ENCODE measurements at regions of chr1 and their contacts with region 1.

Region 1: DNA sequence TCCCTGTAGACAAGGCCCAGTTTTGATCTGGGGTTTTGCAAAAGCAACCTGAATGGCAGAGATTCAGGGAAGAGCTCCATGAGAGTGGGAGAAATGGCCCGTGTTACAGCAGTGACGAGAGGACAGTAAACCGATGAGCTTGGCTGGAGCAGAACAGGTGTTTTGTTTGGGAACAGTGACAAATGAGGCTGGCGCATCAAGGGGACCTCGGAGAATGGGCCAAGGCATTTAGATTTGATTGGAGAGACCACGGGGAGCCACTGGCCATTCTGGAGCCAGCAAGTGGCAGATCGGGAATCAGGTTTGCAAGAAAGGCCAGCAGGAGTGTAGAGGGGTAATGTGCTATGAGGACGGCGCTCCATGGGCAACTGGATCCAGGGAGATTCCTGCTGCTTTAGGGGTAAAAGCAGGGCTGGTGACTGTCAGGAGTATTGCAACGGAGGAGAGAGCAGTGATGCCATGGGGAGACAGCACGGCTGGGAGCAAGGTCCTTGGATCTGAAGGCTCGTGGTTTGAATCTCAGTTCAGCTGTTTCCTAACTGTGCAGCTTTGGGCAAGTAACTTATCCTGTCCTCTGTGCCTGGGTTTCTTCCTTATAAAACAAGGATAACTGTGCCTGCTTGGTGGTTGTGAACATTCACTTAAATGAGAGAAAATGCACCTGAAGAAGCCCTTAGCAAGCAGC is 9.9 kb upstream of the KLHDC7A start:
- DNase-seq: no peak
- H3K4me3 ChIP-seq: no peak overlapping the region
- H3K27ac ChIP-seq: no peak overlapping the region
- H3K4me1 ChIP-seq: peaks cover 0 to 1% (median 0%) of the 10 kb centered on the region in 4 experiments; a peak in 3 of 7 replicates
- H3K27me3 ChIP-seq: no peaks in the 10 kb centered on the region
- CTCF ChIP-seq: no peak
- EP300 ChIP-seq: no peak
- POLR2A ChIP-seq: no peak
- RAD21 ChIP-seq: no peak

Region 2: DNA sequence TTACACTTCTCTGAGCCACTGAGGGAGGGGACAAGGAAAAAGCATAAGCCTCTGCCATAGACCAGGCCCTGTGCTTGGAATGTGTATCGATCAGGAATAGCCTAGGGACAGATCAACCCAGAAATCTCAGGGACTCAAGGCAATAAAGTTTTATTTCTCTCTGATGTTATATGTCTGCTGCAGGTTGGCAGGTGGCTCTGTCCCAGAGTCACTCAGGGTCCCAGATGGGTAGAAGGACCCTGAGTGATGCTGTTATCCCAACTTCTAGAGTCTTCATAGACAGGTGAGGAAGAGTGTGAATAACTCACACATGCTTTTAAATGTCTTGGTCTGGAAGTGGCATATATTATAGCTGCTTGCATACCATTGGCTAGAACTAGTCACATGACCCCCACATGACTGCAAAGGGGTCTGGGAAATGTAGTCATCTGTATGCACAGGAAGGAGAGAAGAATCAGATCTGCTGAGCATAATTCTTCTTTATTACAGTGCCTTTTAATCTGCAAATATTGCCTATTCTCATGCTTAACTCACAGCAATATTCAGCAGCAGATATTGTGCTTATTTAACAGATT is 18.4 kb before region 1 on chr1:
- CTCF ChIA-PET with region 1: no interaction called
- POLR2A ChIA-PET with region 1: no interaction called
- DNase-seq: no peak
- H3K4me3 ChIP-seq: no peak overlapping the region
- H3K27ac ChIP-seq: no peak overlapping the region
- H3K4me1 ChIP-seq: peaks cover 2 to 10% (median 5%) of the 10 kb centered on the region in 4 experiments; a peak in 6 of 7 replicates
- H3K27me3 ChIP-seq: no peaks in the 10 kb centered on the region; a peak in 2 of 7 replicates
- CTCF ChIP-seq: no peak
- EP300 ChIP-seq: no peak
- POLR2A ChIP-seq: no peak
- RAD21 ChIP-seq: no peak

Region 3: GRCh38 chr1:18486195-18486594 is 15.4 kb after region 1 on chr1:
- CTCF ChIA-PET with region 1: interaction called, 26 read pairs
- POLR2A ChIA-PET with region 1: interaction called, 19 read pairs
- DNase-seq: peak; percentile 19 to 74
- H3K4me3 ChIP-seq: no peak overlapping the region
- H3K27ac ChIP-seq: no peak overlapping the region
- H3K4me1 ChIP-seq: peaks cover 0 to 18% (median 8%) of the 10 kb centered on the region in 4 experiments; a peak in 6 of 7 replicates
- H3K27me3 ChIP-seq: no peaks in the 10 kb centered on the region
- CTCF ChIP-seq: peak; percentile 74 to 97 (median 79)
- EP300 ChIP-seq: no peak
- POLR2A ChIP-seq: peak in 1 of 2 experiments; percentile 26; a peak in 1 of 3 replicates
- RAD21 ChIP-seq: peak; percentile 68 to 83